Activated T-helper 2 cell treated with anti-CD3 and anti-CD28 coated beads, Interferon-gamma antibody, Interleukin-2, Interleukin-4, amounts not matched to agents 10 μg/mL and 5 μg/mL and 100 μg/mL, durations not matched to agents 14 hours and 24 hours and 36 hours (primary cell): ENCODE measurements at regions of chr4 and their contacts with region 1.

Region 1: GRCh38 chr4:103008875-103009729 is 10.4 kb downstream of the SLC9B1 start:
- DNase-seq: no peak
- H3K4me3 Mint-ChIP-seq: no peak overlapping the region
- H3K27ac Mint-ChIP-seq: no peak overlapping the region
- H3K4me1 Mint-ChIP-seq: peaks cover 6% of the 10 kb centered on the region
- H3K27me3 Mint-ChIP-seq: peaks cover 10% of the 10 kb centered on the region

Region 2: GRCh38 chr4:102627831-102628523 is 381.1 kb before region 1 on chr4:
- intact Hi-C with region 1: loop called (anchors 1 kb)
- DNase-seq: no peak
- H3K4me3 Mint-ChIP-seq: no peak overlapping the region
- H3K27ac Mint-ChIP-seq: peak overlapping the region; percentile 74
- H3K4me1 Mint-ChIP-seq: peaks cover 46% of the 10 kb centered on the region
- H3K27me3 Mint-ChIP-seq: no peaks in the 10 kb centered on the region

Region 3: DNA sequence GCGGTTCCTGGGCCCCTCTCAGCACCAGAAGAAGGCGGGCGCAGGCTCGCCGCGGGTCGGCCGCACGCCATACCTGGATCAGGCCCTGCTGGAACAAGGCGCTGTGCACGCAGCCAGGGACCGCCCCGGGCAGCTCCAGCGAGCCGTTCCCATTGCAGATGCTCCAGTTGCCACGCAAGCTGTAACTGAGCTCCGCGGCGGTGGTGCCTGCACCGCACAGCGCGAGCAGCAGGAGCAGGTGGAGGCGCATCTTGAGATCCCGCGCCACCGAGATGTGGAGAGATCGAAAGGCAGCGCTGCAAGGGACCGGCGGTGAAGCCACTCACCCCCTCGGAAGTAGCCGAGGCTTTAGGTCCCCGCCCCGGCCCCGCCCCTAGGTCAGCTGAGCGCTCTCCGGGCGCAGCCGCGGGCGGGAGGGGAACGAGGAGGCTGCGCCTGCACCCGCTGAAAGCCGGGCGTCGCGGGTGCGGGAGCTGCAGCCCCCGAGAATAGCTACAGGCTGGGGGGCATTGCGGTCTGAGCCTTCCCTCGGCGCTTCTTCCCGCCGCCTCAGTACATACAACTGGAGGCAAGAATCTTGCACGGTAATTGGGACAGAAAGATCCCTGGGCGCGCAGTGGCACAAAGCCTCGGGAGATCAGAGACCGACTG is 248.3 kb before region 1 on chr4 and contains the start of gene MANBA:
- intact Hi-C with region 1: loop called (anchors 5 kb)
- DNase-seq: peak; percentile 79
- H3K4me3 Mint-ChIP-seq: peak within 1 kb of the TSS; percentile 95
- H3K27ac Mint-ChIP-seq: peak within 1 kb of the TSS; percentile 84
- H3K4me1 Mint-ChIP-seq: peaks cover 33% of the 10 kb centered on the region
- H3K27me3 Mint-ChIP-seq: peaks cover 19% of the 10 kb centered on the region
- total RNA-seq, gene MANBA: 9.4 and 11.3 TPM in 2 replicates